PC-9 (cell line): ENCODE measurements at regions of chr18 and their contacts with region 1.

Region 1: GRCh38 chr18:3525870-3526420 is 76.0 kb downstream of the TGIF1 start:
- DNase-seq: no peak
- H3K4me3 ChIP-seq: no peak overlapping the region
- H3K27ac ChIP-seq: no peak overlapping the region
- H3K4me1 ChIP-seq: no peaks in the 10 kb centered on the region
- H3K27me3 ChIP-seq: no peaks in the 10 kb centered on the region
- CTCF ChIP-seq: no peak

Region 2: GRCh38 chr18:3441290-3441689 is 84.7 kb before region 1 on chr18:
- CTCF ChIA-PET with region 1: no interaction called
- POLR2A ChIA-PET with region 1: no interaction called
- intact Hi-C with region 1: no loop called
- DNase-seq: peak in 1 of 2 experiments; percentile 19
- H3K4me3 ChIP-seq: no peak overlapping the region
- H3K27ac ChIP-seq: peak overlapping the region; percentile 37
- H3K4me1 ChIP-seq: peaks cover 29% of the 10 kb centered on the region
- H3K27me3 ChIP-seq: no peaks in the 10 kb centered on the region
- CTCF ChIP-seq: no peak

Region 3: DNA sequence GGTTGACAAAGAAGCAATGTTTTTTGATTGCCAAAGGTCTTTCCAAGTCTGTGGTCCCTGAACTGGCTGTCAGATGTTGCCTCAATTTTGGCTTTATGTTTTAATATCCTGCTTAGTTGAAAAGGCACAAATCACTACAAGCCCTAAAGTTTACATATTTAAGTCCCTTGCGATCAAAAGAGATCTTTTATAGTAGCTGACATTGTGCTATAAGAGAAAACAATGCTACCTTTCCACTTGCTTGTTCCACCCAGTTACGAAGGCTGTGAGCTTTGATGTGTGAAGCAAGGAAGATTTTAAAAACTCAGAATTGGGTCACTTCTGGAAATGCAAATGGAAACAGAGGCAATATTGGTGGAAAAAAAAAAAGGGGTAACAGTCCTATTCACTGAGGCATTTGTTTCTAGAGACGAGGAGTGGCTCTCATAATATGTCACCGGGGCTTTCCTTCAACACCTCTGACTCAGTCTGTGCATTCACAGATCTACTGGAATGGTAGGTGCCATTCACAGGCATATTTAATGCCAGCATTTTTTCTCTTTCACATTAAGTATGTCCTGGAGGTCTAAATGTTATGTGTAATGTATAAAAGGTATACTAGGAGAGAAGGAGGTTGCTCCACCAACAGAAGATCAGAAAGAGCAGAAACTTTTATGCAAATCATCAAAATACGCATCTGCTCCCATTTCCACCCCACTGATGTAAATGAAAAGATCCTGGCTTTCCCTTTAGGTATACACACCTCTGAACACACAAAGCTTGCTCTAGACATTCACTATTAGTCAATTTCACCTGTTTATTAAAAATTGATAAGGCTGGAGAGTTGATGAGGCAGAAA is 15.8 kb after region 1 on chr18:
- CTCF ChIA-PET with region 1: interaction called, 22 read pairs
- POLR2A ChIA-PET with region 1: no interaction called
- intact Hi-C with region 1: no loop called
- DNase-seq: peak; percentile 14 to 43
- H3K4me3 ChIP-seq: no peak overlapping the region
- H3K27ac ChIP-seq: peak overlapping the region; percentile 65; the same call in 1 of the 2 replicates
- H3K4me1 ChIP-seq: peaks cover 30% of the 10 kb centered on the region
- H3K27me3 ChIP-seq: no peaks in the 10 kb centered on the region
- CTCF ChIP-seq: no peak